IMR-90 (cell line): ENCODE measurements at regions of chr9 and their contacts with region 1.

Region 1: GRCh38 chr9:21789541-21790037 is 12.8 kb upstream of the MTAP start:
- DNase-seq: peak; percentile 95
- ATAC-seq: peak; percentile 95
- H3K4me3 ChIP-seq: peak overlapping the region; percentile 4; the same call in 1 of the 2 replicates
- H3K27ac ChIP-seq: no peak overlapping the region
- H3K4me1 ChIP-seq: no peaks in the 10 kb centered on the region
- H3K27me3 ChIP-seq: no peaks in the 10 kb centered on the region
- CTCF ChIP-seq: peak; percentile 70
- POLR2A ChIP-seq: no peak
- RAD21 ChIP-seq: peak; percentile 84

Region 2: DNA sequence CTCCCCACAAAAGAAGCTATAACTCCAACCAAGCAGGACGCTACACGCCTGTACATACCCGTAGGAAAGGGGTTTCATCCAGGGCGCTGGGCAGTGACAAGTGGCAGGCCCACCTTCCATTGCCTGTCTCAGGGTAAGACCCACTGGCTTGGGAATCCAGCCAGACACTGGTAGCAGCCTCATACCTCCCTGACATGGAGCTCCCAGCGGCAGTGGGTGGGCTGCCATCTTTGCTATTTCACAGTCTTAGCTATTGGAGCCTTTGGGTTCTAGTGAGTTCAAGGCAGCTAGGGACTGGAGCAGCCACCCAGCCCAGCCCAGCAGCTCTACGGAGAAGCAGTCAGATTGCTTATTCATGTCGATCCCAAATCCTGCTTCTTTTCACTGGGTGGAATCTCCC is 579.3 kb before region 1 on chr9:
- CTCF ChIA-PET with region 1: no interaction called
- POLR2A ChIA-PET with region 1: no interaction called
- dilution Hi-C with region 1: no loop called
- in situ Hi-C with region 1: loop called (anchors 25 kb)
- intact Hi-C with region 1: no loop called
- DNase-seq: no peak
- ATAC-seq: no peak
- H3K4me3 ChIP-seq: no peak overlapping the region
- H3K27ac ChIP-seq: no peak overlapping the region
- H3K4me1 ChIP-seq: no peaks in the 10 kb centered on the region
- H3K27me3 ChIP-seq: no peaks in the 10 kb centered on the region
- CTCF ChIP-seq: no peak
- POLR2A ChIP-seq: no peak
- RAD21 ChIP-seq: no peak

Region 3: DNA sequence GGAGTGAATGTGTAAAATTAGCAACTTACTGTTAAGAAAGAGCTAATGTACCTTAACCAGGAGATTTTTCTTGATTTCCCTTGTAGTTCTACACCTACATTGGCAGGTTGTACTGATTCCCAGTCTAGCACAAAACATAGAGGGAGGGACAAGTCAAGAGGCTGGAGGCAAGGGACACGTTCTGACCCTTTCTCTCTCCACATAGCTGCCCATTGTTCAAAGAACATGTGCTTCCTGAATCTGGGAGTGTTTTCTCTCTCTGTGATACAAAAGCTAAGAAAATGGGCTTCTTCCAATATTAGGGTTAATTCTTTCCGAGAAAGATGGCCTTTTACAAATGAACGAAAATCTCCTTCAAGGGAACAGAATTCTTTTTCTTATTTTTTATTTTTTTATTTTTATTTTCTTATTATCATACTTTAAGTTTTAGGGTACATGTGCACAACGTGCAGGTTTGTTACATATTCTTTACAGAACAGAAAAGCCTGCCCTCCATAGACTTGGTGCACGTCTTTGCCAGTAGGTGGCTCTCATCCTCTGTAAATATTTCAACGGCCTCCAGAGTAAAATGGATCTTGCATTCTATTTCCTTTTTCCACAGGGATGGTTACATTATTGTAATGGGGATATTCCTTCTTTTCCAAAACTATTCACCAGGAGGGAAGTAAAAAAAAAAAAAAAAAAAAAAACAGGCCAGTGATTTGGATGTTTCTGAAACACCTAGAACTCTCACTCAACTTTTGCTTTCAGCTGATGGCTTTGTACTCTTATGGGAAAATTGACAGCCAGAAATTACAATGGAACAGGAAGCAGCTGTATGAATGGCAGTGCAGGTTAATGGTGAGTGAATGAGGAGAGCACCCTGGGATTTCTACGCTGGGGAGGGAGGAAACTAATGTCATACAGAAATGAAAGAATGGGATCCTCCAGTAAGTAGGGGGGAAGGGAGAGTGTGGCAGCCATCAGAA is 471.3 kb before region 1 on chr9:
- CTCF ChIA-PET with region 1: no interaction called
- POLR2A ChIA-PET with region 1: no interaction called
- dilution Hi-C with region 1: no loop called
- in situ Hi-C with region 1: no loop called
- intact Hi-C with region 1: loop called (anchors 1 kb)
- DNase-seq: peak; percentile 50
- ATAC-seq: peak; percentile 91
- H3K4me3 ChIP-seq: no peak overlapping the region
- H3K27ac ChIP-seq: no peak overlapping the region
- H3K4me1 ChIP-seq: peaks cover 2% of the 10 kb centered on the region; the same call in 1 of the 2 replicates
- H3K27me3 ChIP-seq: peaks cover 6% of the 10 kb centered on the region
- CTCF ChIP-seq: peak; percentile 75
- POLR2A ChIP-seq: no peak
- RAD21 ChIP-seq: peak; percentile 56

Region 4: GRCh38 chr9:21434202-21435014 is 355.2 kb before region 1 on chr9:
- CTCF ChIA-PET with region 1: interaction called, 3 read pairs
- POLR2A ChIA-PET with region 1: no interaction called
- dilution Hi-C with region 1: no loop called
- in situ Hi-C with region 1: no loop called
- intact Hi-C with region 1: loop called (anchors 1 kb)
- DNase-seq: peak; percentile 73
- ATAC-seq: peak; percentile 48; the same call in 1 of the 2 replicates
- H3K4me3 ChIP-seq: no peak overlapping the region
- H3K27ac ChIP-seq: no peak overlapping the region
- H3K4me1 ChIP-seq: no peaks in the 10 kb centered on the region
- H3K27me3 ChIP-seq: peaks cover 8% of the 10 kb centered on the region
- CTCF ChIP-seq: peak; percentile 72
- POLR2A ChIP-seq: no peak
- RAD21 ChIP-seq: peak; percentile 55

Region 5: GRCh38 chr9:21491742-21492141 is 297.8 kb before region 1 on chr9:
- CTCF ChIA-PET with region 1: interaction called, 4 read pairs
- POLR2A ChIA-PET with region 1: no interaction called
- dilution Hi-C with region 1: no loop called
- in situ Hi-C with region 1: loop called (anchors 10 kb)
- intact Hi-C with region 1: loop called (anchors 1 kb)
- DNase-seq: no peak
- ATAC-seq: peak; percentile 17; the same call in 1 of the 2 replicates
- H3K4me3 ChIP-seq: no peak overlapping the region
- H3K27ac ChIP-seq: no peak overlapping the region
- H3K4me1 ChIP-seq: no peaks in the 10 kb centered on the region
- H3K27me3 ChIP-seq: no peaks in the 10 kb centered on the region
- CTCF ChIP-seq: peak; percentile 49
- POLR2A ChIP-seq: no peak
- RAD21 ChIP-seq: peak; percentile 48

Region 6: DNA sequence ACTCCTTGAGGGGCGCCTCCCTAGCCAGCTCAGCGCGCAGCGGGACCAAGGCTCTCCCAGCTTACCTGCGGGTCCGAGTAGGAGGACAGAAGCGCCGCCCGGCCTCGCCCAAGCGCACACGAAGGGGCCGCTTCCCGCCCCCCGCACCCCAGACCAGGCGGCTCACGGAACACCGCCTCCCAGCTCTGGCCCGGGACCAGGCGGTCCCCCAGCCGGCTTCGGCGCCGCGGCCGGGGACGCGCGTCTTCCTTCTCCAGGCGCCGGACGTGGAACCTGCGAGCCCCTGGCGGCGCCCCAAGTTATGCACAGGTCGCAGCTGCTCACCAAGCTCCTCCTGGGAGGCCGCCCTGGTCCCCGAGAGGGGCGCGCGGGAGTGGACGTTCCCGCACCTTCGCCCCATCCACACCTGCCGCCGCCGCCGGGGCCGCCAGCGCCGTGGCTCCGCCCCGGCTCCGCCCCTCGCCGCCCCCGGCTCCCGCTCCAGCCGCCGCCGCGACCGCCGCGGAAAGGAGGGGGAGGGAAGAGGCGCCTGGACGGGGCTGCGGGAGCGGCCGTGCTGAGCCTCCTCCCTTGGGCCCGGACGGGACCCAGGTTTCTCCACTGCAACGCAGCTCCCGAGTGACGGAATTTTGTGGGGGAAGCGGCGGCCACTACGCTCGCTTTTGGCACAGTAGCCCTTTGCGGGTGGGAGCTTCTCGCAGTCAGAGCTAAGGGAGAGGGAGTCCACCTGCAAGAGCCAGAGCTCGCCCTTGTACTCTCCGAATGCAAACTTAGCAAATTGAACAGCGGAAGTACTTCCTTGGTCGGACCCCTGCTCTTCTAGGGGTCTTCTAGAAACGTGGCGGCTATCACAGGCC is 229.9 kb before region 1 on chr9:
- CTCF ChIA-PET with region 1: no interaction called
- POLR2A ChIA-PET with region 1: no interaction called
- dilution Hi-C with region 1: loop called (anchors 25 kb)
- in situ Hi-C with region 1: no loop called
- intact Hi-C with region 1: loop called (anchors 1 kb)
- DNase-seq: peak; percentile 55
- ATAC-seq: peak; percentile 91
- H3K4me3 ChIP-seq: peak overlapping the region; percentile 98
- H3K27ac ChIP-seq: peak overlapping the region; percentile 94
- H3K4me1 ChIP-seq: peaks cover 9% of the 10 kb centered on the region
- H3K27me3 ChIP-seq: no peaks in the 10 kb centered on the region
- CTCF ChIP-seq: no peak
- POLR2A ChIP-seq: no peak; the same call in 1 of the 2 replicates
- RAD21 ChIP-seq: peak; percentile 31

Region 7: GRCh38 chr9:21688108-21689102 is 101.2 kb before region 1 on chr9:
- CTCF ChIA-PET with region 1: no interaction called
- POLR2A ChIA-PET with region 1: no interaction called
- dilution Hi-C with region 1: no loop called
- in situ Hi-C with region 1: loop called (anchors 25 kb)
- intact Hi-C with region 1: loop called (anchors 5 kb)
- DNase-seq: peak; percentile 81
- ATAC-seq: peak; percentile 55
- H3K4me3 ChIP-seq: peak overlapping the region; percentile 18
- H3K27ac ChIP-seq: peak overlapping the region; percentile 58
- H3K4me1 ChIP-seq: peaks cover 28% of the 10 kb centered on the region
- H3K27me3 ChIP-seq: no peaks in the 10 kb centered on the region
- CTCF ChIP-seq: no peak
- POLR2A ChIP-seq: no peak
- RAD21 ChIP-seq: no peak

Region 8: GRCh38 chr9:21761309-21761901 is 28.2 kb before region 1 on chr9:
- CTCF ChIA-PET with region 1: no interaction called
- POLR2A ChIA-PET with region 1: no interaction called
- dilution Hi-C with region 1: no loop called
- in situ Hi-C with region 1: no loop called
- intact Hi-C with region 1: no loop called
- DNase-seq: no peak
- ATAC-seq: no peak
- H3K4me3 ChIP-seq: no peak overlapping the region
- H3K27ac ChIP-seq: no peak overlapping the region
- H3K4me1 ChIP-seq: no peaks in the 10 kb centered on the region
- H3K27me3 ChIP-seq: no peaks in the 10 kb centered on the region
- CTCF ChIP-seq: no peak
- POLR2A ChIP-seq: no peak
- RAD21 ChIP-seq: no peak

Region 9: DNA sequence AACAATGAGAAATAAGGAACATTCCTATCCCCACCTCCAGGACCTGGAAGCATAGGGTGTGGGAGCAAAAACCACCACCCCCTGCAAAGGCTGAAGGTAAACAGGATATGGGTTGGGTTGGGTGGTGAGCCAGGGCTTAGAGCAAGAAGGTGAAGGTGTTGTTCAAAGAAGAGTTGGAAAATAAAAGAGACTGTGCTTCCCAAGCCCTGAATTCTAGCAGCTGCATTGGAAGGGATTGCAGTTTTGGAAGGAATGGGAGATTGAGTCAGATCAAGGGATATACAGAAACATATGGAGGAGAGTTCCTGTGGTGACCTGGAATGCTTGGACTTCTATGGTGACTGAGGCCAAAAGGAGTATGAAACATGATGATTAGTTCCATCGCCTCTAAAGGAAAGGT is 11.9 kb before region 1 on chr9:
- CTCF ChIA-PET with region 1: no interaction called
- POLR2A ChIA-PET with region 1: no interaction called
- dilution Hi-C with region 1: no loop called
- in situ Hi-C with region 1: no loop called
- intact Hi-C with region 1: no loop called
- DNase-seq: peak; percentile 93
- ATAC-seq: peak; percentile 91
- H3K4me3 ChIP-seq: no peak overlapping the region
- H3K27ac ChIP-seq: peak overlapping the region; percentile 99
- H3K4me1 ChIP-seq: peaks cover 8% of the 10 kb centered on the region
- H3K27me3 ChIP-seq: no peaks in the 10 kb centered on the region
- CTCF ChIP-seq: no peak
- POLR2A ChIP-seq: no peak
- RAD21 ChIP-seq: no peak

Region 10: GRCh38 chr9:22022396-22022795 is 232.8 kb after region 1 on chr9:
- CTCF ChIA-PET with region 1: no interaction called
- POLR2A ChIA-PET with region 1: no interaction called
- dilution Hi-C with region 1: no loop called
- in situ Hi-C with region 1: no loop called
- intact Hi-C with region 1: no loop called
- DNase-seq: no peak
- ATAC-seq: no peak
- H3K4me3 ChIP-seq: no peak overlapping the region
- H3K27ac ChIP-seq: no peak overlapping the region
- H3K4me1 ChIP-seq: no peaks in the 10 kb centered on the region
- H3K27me3 ChIP-seq: no peaks in the 10 kb centered on the region
- CTCF ChIP-seq: no peak
- POLR2A ChIP-seq: no peak
- RAD21 ChIP-seq: no peak